PC-9 (cell line): ENCODE measurements at regions of chr3 and their contacts with region 1.

Region 1: DNA sequence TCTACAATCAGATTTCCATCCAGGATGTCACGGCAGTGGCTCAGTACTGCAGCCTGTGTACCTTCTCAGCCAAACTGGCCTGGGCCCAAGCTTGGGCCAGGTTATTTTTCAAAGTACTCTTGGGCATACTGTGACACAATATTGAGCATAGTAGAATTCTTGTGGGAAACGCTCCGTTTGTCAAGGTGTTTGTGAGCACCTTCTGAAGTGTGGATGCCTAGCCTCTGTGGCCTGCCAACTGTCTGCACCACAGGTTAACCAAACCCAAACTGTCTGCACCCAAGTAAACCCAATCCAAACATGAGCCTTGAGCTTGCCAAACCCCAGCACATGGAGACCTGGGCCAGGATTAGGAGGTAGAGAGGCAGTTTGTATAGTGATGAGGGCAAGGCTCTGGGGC is 25.4 kb downstream of the CTDSPL start:
- DNase-seq: no peak
- H3K4me3 ChIP-seq: no peak overlapping the region
- H3K27ac ChIP-seq: no peak overlapping the region
- H3K4me1 ChIP-seq: peaks cover 4% of the 10 kb centered on the region; the same call in 1 of the 2 replicates
- H3K27me3 ChIP-seq: no peaks in the 10 kb centered on the region
- CTCF ChIP-seq: no peak

Region 2: GRCh38 chr3:36149447-36149865 is 1737.6 kb before region 1 on chr3:
- CTCF ChIA-PET with region 1: no interaction called
- POLR2A ChIA-PET with region 1: interaction called, 14 read pairs
- intact Hi-C with region 1: no loop called
- DNase-seq: peak; percentile 46 to 80
- H3K4me3 ChIP-seq: no peak overlapping the region
- H3K27ac ChIP-seq: peak overlapping the region; percentile 41
- H3K4me1 ChIP-seq: peaks cover 21% of the 10 kb centered on the region
- H3K27me3 ChIP-seq: no peaks in the 10 kb centered on the region
- CTCF ChIP-seq: no peak

Region 3: DNA sequence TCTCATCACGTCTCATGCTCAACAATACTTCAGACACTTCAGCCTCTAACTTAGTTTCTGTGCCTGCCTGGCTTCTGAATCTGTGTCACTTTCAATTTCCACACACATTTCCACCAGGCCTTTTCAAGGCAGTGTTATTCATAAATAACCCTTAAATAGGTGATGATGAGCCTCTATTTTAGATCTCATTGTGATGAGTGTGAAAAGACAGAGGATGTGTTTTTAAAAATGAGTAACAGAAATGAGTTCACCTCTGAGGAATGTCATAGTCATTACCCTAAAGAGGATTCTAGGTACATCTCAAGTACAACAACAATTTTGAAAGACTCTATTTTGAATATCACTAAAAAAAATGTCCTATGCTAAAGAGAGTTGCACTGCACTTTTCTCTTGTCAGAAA is 1442.2 kb before region 1 on chr3:
- CTCF ChIA-PET with region 1: no interaction called
- POLR2A ChIA-PET with region 1: interaction called, 19 read pairs
- intact Hi-C with region 1: no loop called
- DNase-seq: no peak
- H3K4me3 ChIP-seq: no peak overlapping the region
- H3K27ac ChIP-seq: no peak overlapping the region
- H3K4me1 ChIP-seq: no peaks in the 10 kb centered on the region
- H3K27me3 ChIP-seq: no peaks in the 10 kb centered on the region
- CTCF ChIP-seq: no peak

Region 4: GRCh38 chr3:38136777-38137614 is 249.9 kb after region 1 on chr3 and contains the start of gene ACAA1:
- CTCF ChIA-PET with region 1: no interaction called
- POLR2A ChIA-PET with region 1: no interaction called
- intact Hi-C with region 1: no loop called
- DNase-seq: peak; percentile 96 to 99
- H3K4me3 ChIP-seq: peak within 1 kb of the TSS; percentile 98
- H3K27ac ChIP-seq: peak within 1 kb of the TSS; percentile 69
- H3K4me1 ChIP-seq: peaks cover 71% of the 10 kb centered on the region
- H3K27me3 ChIP-seq: no peaks in the 10 kb centered on the region
- CTCF ChIP-seq: no peak
- total RNA-seq, gene ACAA1: 58.9 and 65.8 TPM in 2 replicates